B cell (primary cell): ENCODE measurements at regions of chr11 and their contacts with region 1.

Region 1: GRCh38 chr11:128630367-128631230 is 43.2 kb upstream of the ETS1 start:
- DNase-seq: peak; percentile 96
- ATAC-seq: peak; percentile 87
- H3K4me3 ChIP-seq: peak overlapping the region in 2 of 5 experiments; percentile 3 to 11
- H3K4me3 Mint-ChIP-seq: peak overlapping the region; percentile 65
- H3K27ac ChIP-seq: peak overlapping the region; percentile 43 to 90
- H3K27ac Mint-ChIP-seq: peak overlapping the region; percentile 93
- H3K4me1 ChIP-seq: peaks cover 66 to 68% of the 10 kb centered on the region in 2 donors
- H3K4me1 Mint-ChIP-seq: peaks cover 66% of the 10 kb centered on the region
- H3K27me3 ChIP-seq: no peaks in the 10 kb centered on the region
- H3K27me3 Mint-ChIP-seq: no peaks in the 10 kb centered on the region
- CTCF ChIP-seq: peak; percentile 86

Region 2: GRCh38 chr11:128195057-128195751 is 435.4 kb before region 1 on chr11:
- CTCF ChIA-PET with region 1: interaction called, 20 read pairs
- POLR2A ChIA-PET with region 1: no interaction called
- intact Hi-C with region 1: loop called (anchors 1 kb)
- DNase-seq: peak; percentile 68
- ATAC-seq: peak; percentile 68
- H3K4me3 ChIP-seq: no peak overlapping the region
- H3K4me3 Mint-ChIP-seq: peak overlapping the region; percentile 17
- H3K27ac ChIP-seq: no peak overlapping the region
- H3K27ac Mint-ChIP-seq: peak overlapping the region; percentile 12
- H3K4me1 ChIP-seq: peaks cover 11 to 12% of the 10 kb centered on the region in 2 donors
- H3K4me1 Mint-ChIP-seq: peaks cover 17% of the 10 kb centered on the region
- H3K27me3 ChIP-seq: no peaks in the 10 kb centered on the region
- H3K27me3 Mint-ChIP-seq: no peaks in the 10 kb centered on the region
- CTCF ChIP-seq: peak; percentile 57

Region 3: DNA sequence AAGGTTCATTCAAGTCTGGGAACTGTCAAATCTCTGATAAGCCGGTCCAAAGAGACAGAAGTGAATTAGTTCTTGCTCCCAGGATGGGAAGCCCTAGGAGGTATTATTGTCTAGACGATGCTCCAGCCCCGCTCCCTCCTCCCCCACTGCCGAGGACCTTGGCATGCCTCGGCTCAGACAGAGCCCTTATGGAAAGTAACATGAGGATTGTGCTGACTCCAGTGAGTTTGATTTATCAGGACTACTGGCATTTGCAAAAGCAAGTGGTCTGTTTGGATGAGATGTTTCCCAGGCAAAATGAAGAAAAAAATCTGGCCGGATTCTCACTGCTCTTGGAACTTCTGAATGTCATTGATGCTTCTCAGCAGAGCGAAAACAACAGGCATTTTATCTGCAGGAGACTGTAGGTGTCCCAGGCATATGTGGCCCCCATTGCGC is 384.2 kb before region 1 on chr11:
- CTCF ChIA-PET with region 1: no interaction called
- POLR2A ChIA-PET with region 1: no interaction called
- intact Hi-C with region 1: no loop called
- DNase-seq: no peak
- ATAC-seq: no peak
- H3K4me3 ChIP-seq: no peak overlapping the region
- H3K4me3 Mint-ChIP-seq: no peak overlapping the region
- H3K27ac ChIP-seq: no peak overlapping the region
- H3K27ac Mint-ChIP-seq: no peak overlapping the region
- H3K4me1 ChIP-seq: no peaks in the 10 kb centered on the region
- H3K4me1 Mint-ChIP-seq: no peaks in the 10 kb centered on the region
- H3K27me3 ChIP-seq: no peaks in the 10 kb centered on the region
- H3K27me3 Mint-ChIP-seq: no peaks in the 10 kb centered on the region
- CTCF ChIP-seq: no peak

Region 4: DNA sequence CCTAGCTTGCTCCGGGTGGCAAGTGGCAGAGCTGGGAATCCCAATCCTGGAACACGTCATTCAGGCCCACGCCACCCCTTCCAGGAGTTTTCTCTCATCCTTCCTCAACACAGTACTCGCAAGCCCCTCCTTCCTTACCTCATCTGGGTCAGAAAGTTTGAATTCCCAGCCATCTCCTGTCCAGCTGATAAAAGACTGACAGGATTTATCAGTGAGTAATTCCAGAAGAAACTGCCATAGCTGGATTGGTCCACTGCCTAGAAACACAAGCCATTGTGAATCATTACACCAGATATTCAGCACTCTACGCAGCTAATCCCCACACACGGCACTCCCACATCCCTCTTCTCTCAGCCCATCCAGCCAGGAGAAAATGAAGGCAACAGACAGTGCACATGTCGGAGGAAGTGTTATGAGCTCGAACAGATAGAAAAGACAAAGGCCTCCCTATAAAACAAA is 167.2 kb before region 1 on chr11:
- CTCF ChIA-PET with region 1: interaction called, 40 read pairs
- POLR2A ChIA-PET with region 1: no interaction called
- intact Hi-C with region 1: no loop called
- DNase-seq: no peak
- ATAC-seq: no peak
- H3K4me3 ChIP-seq: no peak overlapping the region
- H3K4me3 Mint-ChIP-seq: no peak overlapping the region
- H3K27ac ChIP-seq: peak overlapping the region; percentile 53 to 90
- H3K27ac Mint-ChIP-seq: peak overlapping the region; percentile 90
- H3K4me1 ChIP-seq: peaks cover 58 to 60% of the 10 kb centered on the region in 2 donors
- H3K4me1 Mint-ChIP-seq: peaks cover 71% of the 10 kb centered on the region
- H3K27me3 ChIP-seq: no peaks in the 10 kb centered on the region
- H3K27me3 Mint-ChIP-seq: no peaks in the 10 kb centered on the region
- CTCF ChIP-seq: no peak

Region 5: GRCh38 chr11:128515826-128516778 is 114.5 kb before region 1 on chr11:
- CTCF ChIA-PET with region 1: interaction called, 82 read pairs
- POLR2A ChIA-PET with region 1: interaction called, 11 read pairs
- intact Hi-C with region 1: no loop called
- DNase-seq: no peak
- ATAC-seq: no peak
- H3K4me3 ChIP-seq: peak overlapping the region in 4 of 5 experiments; percentile 79 to 98 (median 92)
- H3K4me3 Mint-ChIP-seq: peak overlapping the region; percentile 92
- H3K27ac ChIP-seq: peak overlapping the region in 1 of 2 donors; percentile 82
- H3K27ac Mint-ChIP-seq: peak overlapping the region; percentile 81
- H3K4me1 ChIP-seq: peaks cover 79 to 82% of the 10 kb centered on the region in 2 donors
- H3K4me1 Mint-ChIP-seq: peaks cover 93% of the 10 kb centered on the region
- H3K27me3 ChIP-seq: no peaks in the 10 kb centered on the region
- H3K27me3 Mint-ChIP-seq: no peaks in the 10 kb centered on the region
- CTCF ChIP-seq: no peak

Region 6: DNA sequence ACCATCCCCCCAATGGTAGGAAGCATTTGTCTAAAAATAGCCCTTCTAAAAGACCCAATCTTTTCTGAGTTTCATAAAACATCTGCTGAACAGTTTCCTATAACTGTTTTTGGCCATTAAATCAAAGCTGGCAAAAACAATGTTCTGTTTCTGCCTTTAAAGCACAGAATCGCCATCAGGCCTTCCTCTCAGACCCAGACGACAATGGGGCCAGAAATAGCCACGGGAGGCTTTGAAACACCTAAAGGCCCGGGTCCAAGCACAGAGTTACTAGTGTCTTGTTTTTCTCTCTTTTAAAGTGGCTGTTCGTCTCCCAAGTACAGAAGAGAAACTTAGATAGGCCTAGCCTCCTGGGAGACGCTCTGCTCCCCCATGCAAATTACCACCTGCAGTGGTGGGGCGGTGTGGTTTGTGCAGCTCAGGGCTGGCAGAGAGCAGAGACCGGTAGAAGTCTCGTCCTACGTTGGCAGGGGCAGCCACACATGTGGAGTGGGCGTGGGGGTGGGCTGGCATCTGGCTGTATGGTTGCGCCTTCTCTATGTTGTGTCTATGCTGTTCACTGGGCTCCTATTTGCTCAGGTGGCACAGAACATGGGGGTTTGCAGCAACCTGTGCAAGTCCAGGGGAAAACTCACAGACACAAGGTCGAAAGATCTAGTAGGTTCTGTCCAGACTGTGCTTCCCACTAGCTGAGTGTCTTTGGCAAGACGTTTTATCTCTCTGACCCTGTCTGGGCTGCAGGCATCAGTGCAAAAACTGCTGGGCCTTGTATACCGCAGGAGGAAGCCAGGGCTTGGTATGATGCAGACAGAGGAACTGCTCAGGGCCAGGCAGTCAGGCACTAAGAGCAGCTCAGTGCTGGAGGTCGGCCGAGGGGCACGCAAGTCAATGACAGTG is 19.6 kb before region 1 on chr11:
- CTCF ChIA-PET with region 1: interaction called, 625 read pairs
- POLR2A ChIA-PET with region 1: interaction called, 305 read pairs
- intact Hi-C with region 1: no loop called
- DNase-seq: peak; percentile 95
- ATAC-seq: peak; percentile 89
- H3K4me3 ChIP-seq: peak overlapping the region in 3 of 5 experiments; percentile 20 to 61 (median 29)
- H3K4me3 Mint-ChIP-seq: peak overlapping the region; percentile 58
- H3K27ac ChIP-seq: peak overlapping the region; percentile 93 to 95
- H3K27ac Mint-ChIP-seq: peak overlapping the region; percentile 93
- H3K4me1 ChIP-seq: peaks cover 85 to 87% of the 10 kb centered on the region in 2 donors
- H3K4me1 Mint-ChIP-seq: peaks cover 89% of the 10 kb centered on the region
- H3K27me3 ChIP-seq: no peaks in the 10 kb centered on the region
- H3K27me3 Mint-ChIP-seq: no peaks in the 10 kb centered on the region
- CTCF ChIP-seq: no peak

Region 7: GRCh38 chr11:128757235-128757711 is 126.7 kb after region 1 on chr11:
- CTCF ChIA-PET with region 1: interaction called, 238 read pairs
- POLR2A ChIA-PET with region 1: interaction called, 9 read pairs
- intact Hi-C with region 1: loop called (anchors 1 kb)
- DNase-seq: peak; percentile 90
- ATAC-seq: peak; percentile 82
- H3K4me3 ChIP-seq: peak overlapping the region in 1 of 5 experiments; percentile 25
- H3K4me3 Mint-ChIP-seq: peak overlapping the region; percentile 17
- H3K27ac ChIP-seq: peak overlapping the region; percentile 78 to 79
- H3K27ac Mint-ChIP-seq: peak overlapping the region; percentile 71
- H3K4me1 ChIP-seq: peaks cover 53 to 74% of the 10 kb centered on the region in 2 donors
- H3K4me1 Mint-ChIP-seq: peaks cover 82% of the 10 kb centered on the region
- H3K27me3 ChIP-seq: no peaks in the 10 kb centered on the region
- H3K27me3 Mint-ChIP-seq: no peaks in the 10 kb centered on the region
- CTCF ChIP-seq: peak; percentile 83

Region 8: GRCh38 chr11:129143335-129143734 is 512.7 kb after region 1 on chr11:
- CTCF ChIA-PET with region 1: no interaction called
- POLR2A ChIA-PET with region 1: no interaction called
- intact Hi-C with region 1: no loop called
- DNase-seq: no peak
- ATAC-seq: no peak
- H3K4me3 ChIP-seq: no peak overlapping the region
- H3K4me3 Mint-ChIP-seq: no peak overlapping the region
- H3K27ac ChIP-seq: no peak overlapping the region
- H3K27ac Mint-ChIP-seq: no peak overlapping the region
- H3K4me1 ChIP-seq: no peaks in the 10 kb centered on the region
- H3K4me1 Mint-ChIP-seq: no peaks in the 10 kb centered on the region
- H3K27me3 ChIP-seq: no peaks in the 10 kb centered on the region
- H3K27me3 Mint-ChIP-seq: no peaks in the 10 kb centered on the region
- CTCF ChIP-seq: no peak